ENCODE measurements at regions of chr6 and their contacts with region 1.

Region 1: DNA sequence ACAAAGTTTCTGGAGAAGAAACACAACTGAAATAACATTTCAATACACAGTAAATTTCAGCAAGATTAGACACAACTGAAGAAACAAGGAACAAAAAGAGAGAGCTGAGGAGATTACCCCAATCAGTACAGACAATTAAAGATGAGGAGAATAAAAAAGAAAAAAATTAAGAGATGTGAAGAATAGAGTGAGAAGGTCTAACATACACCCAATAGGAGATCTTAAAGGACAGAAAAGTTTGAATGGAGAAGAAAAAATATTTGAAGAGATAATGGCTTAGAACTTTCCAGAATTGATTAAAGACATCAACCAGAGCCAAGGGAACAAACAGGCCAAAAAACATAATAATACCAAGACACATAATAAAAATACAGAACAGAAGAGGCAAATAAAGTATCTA is 116.4 kb downstream of the HUS1B start:
- DNase-seq: no peak

Region 2: DNA sequence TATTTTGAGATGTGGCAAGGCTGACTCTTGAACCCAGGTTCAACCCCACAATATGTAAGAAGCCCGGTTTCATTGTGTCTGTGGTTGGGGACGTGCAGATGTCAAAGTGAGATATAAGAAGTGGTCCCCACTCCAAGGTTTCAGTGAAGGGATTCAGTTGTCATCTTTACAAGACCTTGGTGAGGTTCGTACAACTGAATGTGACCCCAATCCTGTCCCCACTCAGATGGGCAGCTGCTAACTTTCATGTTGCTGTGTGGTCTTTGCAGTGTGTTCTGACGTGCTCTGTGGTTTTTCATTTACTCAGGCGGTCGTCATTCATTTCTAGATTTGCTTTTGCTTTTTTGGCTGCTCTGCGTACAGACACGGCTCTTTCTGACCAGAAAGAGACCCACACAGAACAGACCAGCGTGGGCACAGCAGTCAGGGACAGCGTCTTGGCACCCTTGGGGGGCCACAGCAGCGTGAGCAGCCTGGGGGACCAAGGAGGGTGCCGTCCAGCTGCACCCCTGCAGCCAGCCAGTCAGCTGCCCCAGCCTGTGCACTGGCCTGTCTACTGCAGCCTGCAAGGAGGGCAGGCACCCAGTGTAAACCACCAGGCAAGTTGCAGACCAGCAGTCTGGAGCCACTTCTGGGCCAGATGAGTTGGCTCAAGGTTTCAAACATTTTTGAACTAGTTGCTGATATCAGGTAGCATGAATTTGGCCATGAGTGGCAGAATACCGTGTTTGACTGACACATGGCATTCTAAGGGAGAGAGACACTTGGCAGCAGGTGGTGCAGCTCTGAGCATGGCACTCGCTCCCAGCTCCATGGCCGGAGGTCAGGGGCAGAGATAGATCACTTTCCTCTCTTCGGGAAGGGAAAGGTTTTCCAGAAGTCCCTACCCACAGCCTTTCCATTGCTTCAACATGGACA is 198.3 kb before region 1 on chr6:
- intact Hi-C with region 1: no loop called
- DNase-seq: peak; percentile 72

Region 3: GRCh38 chr6:389622-390021 is 150.9 kb before region 1 on chr6:
- intact Hi-C with region 1: loop called in 1 of 2 experiments (anchors 5 kb)
- DNase-seq: no peak

Region 4: GRCh38 chr6:506508-506907 is 34.0 kb before region 1 on chr6:
- intact Hi-C with region 1: no loop called
- DNase-seq: no peak

Region 5: GRCh38 chr6:710601-711571 is 170.4 kb after region 1 on chr6:
- intact Hi-C with region 1: no loop called
- DNase-seq: peak; percentile 85